BJ (cell line): ENCODE measurements at regions of chr5 and their contacts with region 1.

Region 1: DNA sequence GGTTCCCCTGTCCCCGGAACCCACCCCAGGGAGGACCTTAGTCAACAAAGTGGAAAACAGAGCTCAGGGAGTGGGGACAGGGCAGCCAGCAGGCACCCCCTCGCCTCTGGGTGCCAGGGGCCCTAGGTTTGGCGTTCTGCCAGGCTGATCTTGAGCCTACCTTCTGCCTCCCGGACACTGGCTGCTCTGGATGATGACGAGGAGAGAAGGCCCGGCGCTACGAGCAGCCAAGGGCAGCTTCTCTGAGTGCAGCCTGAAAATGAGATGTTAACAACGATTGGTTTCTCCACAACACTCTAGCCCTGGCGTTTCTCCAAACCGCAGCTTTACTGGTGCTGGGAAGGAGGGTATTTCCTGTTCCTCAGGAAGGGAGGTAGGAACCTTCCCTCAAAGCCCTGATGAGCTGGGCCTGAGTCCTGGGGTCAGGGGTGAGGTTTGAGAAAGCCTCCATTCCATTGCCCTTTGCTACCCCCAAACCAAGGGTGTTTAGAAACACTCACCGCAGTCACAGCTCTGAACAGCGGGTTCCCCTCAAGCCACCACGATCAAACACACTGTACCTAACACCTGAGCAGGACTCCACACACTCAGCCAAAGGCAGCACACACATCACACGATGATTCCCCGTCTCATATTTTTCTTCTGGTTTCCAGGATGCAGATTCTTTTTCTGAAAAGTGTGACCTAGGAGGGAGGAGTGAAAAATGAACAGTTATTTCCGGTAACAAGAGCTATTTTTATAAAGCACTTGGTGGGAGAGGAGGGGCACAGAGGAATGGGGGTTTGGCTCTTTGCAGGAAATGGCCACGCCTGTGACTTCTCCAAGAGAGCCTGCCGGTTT is at the start of gene STING1:
- DNase-seq: peak; percentile 84
- H3K4me3 ChIP-seq: peak within 1 kb of the TSS; percentile 57
- H3K27me3 ChIP-seq: no peaks in the 10 kb centered on the region
- CTCF ChIP-seq: no peak
- polyA plus RNA-seq, gene STING1: 110 and 194 TPM in 2 replicates

Region 2: DNA sequence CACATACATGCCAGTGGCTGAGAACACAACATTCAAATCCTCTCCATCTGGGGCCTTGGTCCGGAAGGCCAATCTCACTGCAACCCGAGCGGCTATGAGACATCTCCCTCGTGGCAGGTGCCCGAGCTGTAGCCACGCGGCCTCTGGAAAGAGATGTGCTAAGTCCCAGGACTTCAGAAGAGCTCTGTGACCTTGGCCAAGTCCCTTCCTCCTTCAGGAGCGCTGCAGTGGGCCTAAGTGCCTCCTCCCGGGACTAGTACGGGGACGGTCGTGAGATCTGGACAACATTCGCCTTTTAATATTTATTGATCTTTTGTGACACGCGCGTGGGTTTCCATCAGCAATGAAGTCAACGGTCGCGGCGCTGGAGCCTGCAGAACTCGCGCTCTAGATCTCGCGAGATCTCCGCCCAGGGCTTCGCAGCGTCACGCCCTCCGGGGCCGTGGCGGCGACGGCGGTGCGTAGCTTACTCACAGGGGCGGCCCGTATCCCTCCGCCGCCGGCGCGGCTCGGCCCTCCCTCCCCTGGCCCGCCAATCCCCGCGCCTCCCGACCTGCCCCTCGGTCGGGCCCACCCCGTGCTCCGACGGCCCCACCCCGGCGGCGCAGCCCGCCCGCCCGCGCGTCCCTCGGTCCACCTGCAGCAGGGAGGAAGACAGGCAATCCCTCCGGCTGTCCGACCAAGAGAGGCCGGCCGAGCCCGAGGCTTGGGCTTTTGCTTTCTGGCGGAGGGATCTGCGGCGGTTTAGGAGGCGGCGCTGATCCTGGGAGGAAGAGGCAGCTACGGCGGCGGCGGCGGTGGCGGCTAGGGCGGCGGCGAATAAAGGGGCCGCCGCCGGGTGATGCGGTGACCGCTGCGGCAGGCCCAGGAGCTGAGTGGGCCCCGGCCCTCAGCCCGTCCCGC is 78.7 kb after region 1 on chr5 and contains the start of gene UBE2D2:
- CTCF ChIA-PET with region 1: no interaction called
- POLR2A ChIA-PET with region 1: interaction called, 12 read pairs
- DNase-seq: peak; percentile 73
- H3K4me3 ChIP-seq: peak within 1 kb of the TSS; percentile 72
- H3K27me3 ChIP-seq: no peaks in the 10 kb centered on the region
- CTCF ChIP-seq: no peak
- polyA plus RNA-seq, gene UBE2D2: 18.2 and 48.7 TPM in 2 replicates

Region 3: DNA sequence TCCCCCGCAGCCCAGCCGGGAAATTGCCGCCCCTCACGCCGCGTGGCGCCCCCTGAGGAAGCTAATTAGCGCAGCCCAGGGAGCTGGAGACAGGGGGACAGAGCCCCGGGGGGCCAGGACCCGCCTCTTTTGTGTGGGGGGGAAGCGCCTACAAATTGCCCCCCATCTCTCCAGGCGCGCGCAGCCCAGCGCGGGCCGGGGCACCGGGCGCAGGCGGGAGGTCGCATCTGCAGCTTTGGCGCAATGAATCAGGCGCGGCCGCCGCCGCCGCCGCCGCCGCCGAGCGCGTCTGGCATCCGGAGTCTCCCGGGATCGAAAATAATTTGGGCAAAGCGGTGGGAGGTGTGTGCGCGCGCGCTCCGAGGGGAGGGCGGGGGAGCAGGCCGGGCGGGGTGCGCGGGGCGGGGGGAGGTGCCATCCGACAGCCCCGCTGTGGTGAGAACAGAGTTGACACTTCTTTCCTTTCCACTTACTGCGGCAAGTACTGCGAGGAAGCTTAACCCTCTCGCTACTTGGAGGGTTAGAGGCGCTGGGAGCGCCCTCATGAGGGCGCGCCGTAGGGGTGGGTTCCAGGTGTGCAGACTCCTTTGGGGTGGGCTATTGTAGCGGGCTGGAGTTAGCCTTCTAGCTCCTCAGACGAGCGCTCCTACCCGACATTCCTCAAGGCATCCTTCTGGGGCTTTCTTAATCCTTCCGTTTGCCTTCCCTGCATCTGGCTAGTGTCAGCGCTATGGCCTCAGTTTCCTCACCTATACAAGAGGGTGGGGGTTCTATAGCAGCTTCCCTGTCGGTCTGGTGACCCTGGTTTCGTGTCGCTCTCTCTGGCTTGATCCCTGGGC is 229.0 kb after region 1 on chr5:
- CTCF ChIA-PET with region 1: no interaction called
- POLR2A ChIA-PET with region 1: no interaction called
- DNase-seq: no peak
- H3K4me3 ChIP-seq: peak overlapping the region; percentile 44
- H3K27me3 ChIP-seq: no peaks in the 10 kb centered on the region
- CTCF ChIP-seq: peak; percentile 28